Activated CD4-positive, alpha-beta memory T cell treated with anti-CD3 and anti-CD28 coated beads for 36 hours (primary cell): ENCODE measurements at regions of chr15 and their contacts with region 1.

Region 1: DNA sequence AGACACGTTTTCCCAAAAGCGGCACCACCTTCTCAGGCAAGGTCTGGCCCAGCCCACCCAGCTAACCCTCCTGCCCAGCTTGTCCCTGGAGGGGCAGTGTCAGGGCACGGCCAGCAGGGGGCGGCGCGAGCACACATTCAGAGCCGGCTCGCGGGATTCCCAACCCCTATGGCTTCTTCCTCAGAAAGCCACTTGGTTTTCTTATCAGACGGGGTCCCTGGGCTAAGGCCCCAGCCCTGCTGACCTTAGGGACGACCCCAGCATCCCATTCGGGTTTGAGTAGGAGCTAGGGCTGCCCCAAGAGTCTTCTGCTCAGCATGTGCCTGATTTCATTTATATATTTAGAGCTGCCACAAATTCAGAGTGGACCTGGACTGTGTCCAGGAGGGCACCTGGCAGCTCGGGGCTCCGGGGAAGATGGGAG is 14.5 kb downstream of the RLBP1 start:
- DNase-seq: peak; percentile 82
- H3K4me3 Mint-ChIP-seq: no peak overlapping the region
- H3K27ac Mint-ChIP-seq: no peak overlapping the region
- H3K4me1 Mint-ChIP-seq: peaks cover 33% of the 10 kb centered on the region
- H3K27me3 Mint-ChIP-seq: no peaks in the 10 kb centered on the region

Region 2: GRCh38 chr15:89057504-89058133 is 149.3 kb before region 1 on chr15:
- CTCF ChIA-PET with region 1: interaction called, 19 read pairs
- POLR2A ChIA-PET with region 1: no interaction called
- intact Hi-C with region 1: no loop called
- DNase-seq: peak; percentile 90
- H3K4me3 Mint-ChIP-seq: no peak overlapping the region
- H3K27ac Mint-ChIP-seq: no peak overlapping the region
- H3K4me1 Mint-ChIP-seq: peaks cover 11% of the 10 kb centered on the region
- H3K27me3 Mint-ChIP-seq: no peaks in the 10 kb centered on the region

Region 3: DNA sequence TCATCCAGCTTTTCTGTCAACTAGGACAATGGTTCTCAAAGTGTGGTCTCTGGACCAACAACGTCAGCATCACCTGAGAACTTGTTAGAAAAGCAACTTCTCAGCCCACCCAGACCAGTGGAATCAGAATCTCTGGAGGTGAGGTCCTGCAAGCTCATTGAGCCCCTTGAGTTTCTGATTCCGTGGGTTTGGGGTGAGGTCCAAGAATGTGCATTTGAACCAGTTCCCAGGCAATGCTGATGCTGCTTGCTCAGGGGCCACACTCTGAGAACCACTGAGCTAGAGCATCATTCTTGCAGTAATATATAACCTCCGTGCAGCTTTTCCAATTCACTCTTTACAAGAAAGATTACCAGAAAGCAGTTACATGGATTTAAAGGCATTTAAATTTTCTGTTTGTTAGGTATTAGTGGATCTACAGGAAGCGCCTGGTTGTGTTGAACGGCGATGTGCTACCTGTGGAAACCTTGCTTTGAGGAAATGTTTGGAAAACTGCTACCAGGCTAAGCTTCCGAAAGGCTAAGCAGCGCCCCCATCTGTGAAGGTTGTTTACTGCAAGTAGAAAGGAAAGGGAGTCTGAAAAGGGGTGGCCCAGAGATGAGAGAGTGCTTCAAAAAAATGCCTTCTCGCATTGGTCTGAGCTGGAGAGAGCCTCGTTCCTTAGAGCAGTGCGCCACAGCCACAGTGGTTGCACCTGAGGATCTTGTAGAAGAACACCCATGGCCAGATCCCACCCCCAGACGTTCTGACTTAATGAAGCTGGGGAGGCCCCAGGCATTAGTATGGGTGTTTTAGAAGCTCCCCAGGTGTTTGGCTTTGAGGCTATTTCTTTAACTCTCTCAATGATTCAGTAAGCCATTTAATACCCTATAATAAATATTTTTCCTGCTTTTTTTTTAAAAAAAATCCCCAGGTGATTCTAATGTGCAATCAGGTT is 35.5 kb before region 1 on chr15:
- CTCF ChIA-PET with region 1: interaction called, 15 read pairs
- POLR2A ChIA-PET with region 1: no interaction called
- intact Hi-C with region 1: loop called (anchors 2 kb)
- DNase-seq: peak; percentile 53
- H3K4me3 Mint-ChIP-seq: no peak overlapping the region
- H3K27ac Mint-ChIP-seq: no peak overlapping the region
- H3K4me1 Mint-ChIP-seq: peaks cover 24% of the 10 kb centered on the region
- H3K27me3 Mint-ChIP-seq: no peaks in the 10 kb centered on the region

Region 4: DNA sequence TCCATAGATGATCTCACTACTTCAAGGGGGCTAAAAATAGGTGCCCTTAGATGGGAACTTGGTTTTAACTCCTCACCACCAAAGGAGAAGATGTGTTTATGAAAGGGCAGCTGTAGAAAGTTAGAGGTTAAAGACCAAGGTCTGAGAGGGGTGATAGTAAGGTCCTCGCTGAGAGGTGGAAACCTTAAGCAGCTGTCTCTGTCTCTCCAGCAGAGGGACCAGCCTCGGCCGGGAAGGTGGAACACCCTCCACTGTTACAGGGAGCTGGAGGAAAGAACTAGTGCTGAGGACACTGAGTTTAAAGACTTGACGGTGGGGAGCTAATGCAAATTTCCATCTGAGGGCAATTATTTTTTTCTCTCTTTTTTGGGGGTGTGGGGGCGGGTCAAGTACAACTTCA is 23.4 kb after region 1 on chr15:
- CTCF ChIA-PET with region 1: interaction called, 25 read pairs
- POLR2A ChIA-PET with region 1: no interaction called
- intact Hi-C with region 1: no loop called
- DNase-seq: no peak
- H3K4me3 Mint-ChIP-seq: no peak overlapping the region
- H3K27ac Mint-ChIP-seq: no peak overlapping the region
- H3K4me1 Mint-ChIP-seq: no peaks in the 10 kb centered on the region
- H3K27me3 Mint-ChIP-seq: peaks cover 8% of the 10 kb centered on the region

Region 5: DNA sequence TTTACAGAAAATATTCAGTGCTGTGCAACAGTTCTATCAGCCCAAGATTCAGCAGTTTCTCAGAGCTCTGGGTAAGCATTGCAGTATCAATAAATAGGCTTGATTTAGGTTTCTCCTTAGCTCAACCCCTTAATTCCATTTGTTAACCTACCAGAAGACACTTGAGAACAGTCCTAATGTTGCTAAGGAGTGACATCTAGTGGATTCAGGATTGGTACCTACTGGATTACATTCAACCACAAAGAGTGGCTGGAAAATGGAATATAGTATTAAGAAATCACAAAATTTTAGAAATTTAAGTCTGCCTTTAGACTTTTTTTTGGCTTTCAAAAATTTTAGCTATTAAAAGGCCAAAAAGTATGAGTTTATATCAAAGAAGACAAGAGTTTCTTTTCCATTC is 93.0 kb after region 1 on chr15:
- CTCF ChIA-PET with region 1: interaction called, 17 read pairs
- POLR2A ChIA-PET with region 1: no interaction called
- intact Hi-C with region 1: loop called (anchors 5 kb)
- DNase-seq: no peak
- H3K4me3 Mint-ChIP-seq: no peak overlapping the region
- H3K27ac Mint-ChIP-seq: no peak overlapping the region
- H3K4me1 Mint-ChIP-seq: peaks cover 14% of the 10 kb centered on the region
- H3K27me3 Mint-ChIP-seq: no peaks in the 10 kb centered on the region

Region 6: GRCh38 chr15:89334510-89335288 is 127.8 kb after region 1 on chr15 and contains the start of gene POLG:
- CTCF ChIA-PET with region 1: interaction called, 19 read pairs
- POLR2A ChIA-PET with region 1: interaction called, 3 read pairs
- intact Hi-C with region 1: loop called (anchors 2 kb)
- DNase-seq: peak; percentile 99
- H3K4me3 Mint-ChIP-seq: peak within 1 kb of the TSS; percentile 85
- H3K27ac Mint-ChIP-seq: peak within 1 kb of the TSS; percentile 93
- H3K4me1 Mint-ChIP-seq: peaks cover 50% of the 10 kb centered on the region
- H3K27me3 Mint-ChIP-seq: peaks cover 4% of the 10 kb centered on the region
- total RNA-seq, gene POLG: 94.8 to 97.4 TPM

Region 7: DNA sequence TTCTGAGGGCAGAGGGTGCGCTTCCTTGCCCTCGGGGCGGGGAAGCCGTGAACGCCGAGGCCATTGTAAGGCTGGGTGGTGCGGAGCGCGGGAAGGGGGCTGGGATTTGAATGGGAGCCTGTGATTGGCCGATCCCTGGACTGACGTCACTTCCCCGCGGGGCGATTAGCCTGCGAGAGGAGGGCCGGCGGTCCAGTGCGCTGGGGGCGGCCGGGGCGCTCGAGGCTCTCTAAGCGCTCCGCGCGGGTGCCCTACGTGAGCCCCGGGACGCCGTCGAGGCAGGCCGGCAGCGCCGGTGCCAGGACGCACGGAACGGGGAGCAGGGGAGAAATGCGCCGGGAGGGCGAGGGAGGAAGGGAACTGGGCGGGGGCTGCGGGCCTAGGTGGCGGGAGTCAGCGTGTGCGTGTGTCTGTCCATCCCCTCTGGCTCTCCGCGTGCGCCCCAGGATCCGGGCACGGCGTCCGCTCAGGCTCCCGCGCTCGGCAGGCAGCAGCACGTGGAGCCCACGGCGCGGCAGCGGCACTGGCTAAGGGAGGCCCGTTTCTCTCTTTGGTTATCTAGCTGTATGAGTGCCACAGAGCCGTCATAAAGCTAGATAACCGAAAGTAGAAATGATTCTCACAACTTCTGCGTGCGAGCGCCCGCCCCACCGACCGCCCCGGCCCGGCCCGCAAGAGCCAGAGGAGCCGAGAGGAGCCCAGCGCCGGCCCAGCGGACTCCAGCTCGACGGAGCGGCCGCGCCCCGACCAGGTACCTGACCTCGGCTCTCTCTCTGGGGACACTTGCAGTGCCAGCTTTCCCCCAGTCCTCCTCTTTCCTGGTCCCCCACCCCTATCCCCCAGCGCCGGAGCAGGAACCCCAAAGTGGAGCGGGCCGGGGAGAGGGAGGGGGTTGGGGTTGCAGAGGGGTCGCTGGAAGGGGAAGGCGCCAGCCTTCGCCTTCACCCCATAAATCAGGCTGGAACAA is 160.8 kb after region 1 on chr15:
- CTCF ChIA-PET with region 1: no interaction called
- POLR2A ChIA-PET with region 1: no interaction called
- intact Hi-C with region 1: no loop called
- DNase-seq: peak; percentile 38
- H3K4me3 Mint-ChIP-seq: peak overlapping the region; percentile 27
- H3K27ac Mint-ChIP-seq: no peak overlapping the region
- H3K4me1 Mint-ChIP-seq: peaks cover 14% of the 10 kb centered on the region
- H3K27me3 Mint-ChIP-seq: peaks cover 77% of the 10 kb centered on the region